ENCODE measurements at regions of chr3 and their contacts with region 1.

Region 1: DNA sequence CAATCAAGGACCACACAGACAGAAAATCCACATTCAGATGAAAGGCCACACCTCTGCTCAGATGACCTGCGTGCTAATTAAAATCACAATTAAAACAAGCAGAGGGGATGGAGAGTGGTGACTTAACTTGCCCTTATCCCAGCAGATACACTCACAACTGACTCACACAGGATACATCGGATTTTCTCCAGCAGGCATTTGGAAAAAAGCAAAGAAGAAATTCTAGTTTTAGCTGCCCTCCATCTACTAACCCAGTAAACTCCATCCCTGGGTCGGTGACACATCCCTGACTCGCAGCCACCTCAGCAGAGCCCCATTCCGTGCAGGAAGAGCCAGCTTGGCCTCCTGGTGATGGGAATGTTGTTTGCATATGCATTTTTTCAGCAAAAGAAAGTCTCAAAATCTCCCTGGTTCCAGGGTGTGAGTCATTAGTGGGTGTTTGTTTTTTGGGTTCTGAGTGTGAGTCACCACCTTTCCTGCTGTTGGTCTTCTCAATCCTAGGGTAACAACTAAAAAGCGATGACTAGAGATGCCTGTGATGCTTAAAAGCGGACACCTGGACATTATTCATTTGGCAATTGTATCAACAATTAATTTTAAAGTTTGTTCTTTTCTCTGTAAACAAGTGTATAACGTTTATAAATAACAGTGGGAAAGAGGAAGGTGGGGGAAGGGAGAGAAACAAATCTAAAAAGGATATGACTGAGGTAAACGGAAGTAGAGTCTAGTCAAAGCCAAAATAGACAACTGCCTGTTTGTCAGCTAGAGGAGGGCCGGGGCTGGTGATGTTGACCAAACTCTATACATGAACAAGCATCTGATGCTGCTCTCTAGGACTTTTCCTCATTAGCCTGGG is 49.8 kb upstream of the SLC4A7 start:
- DNase-seq: peak; percentile 70
- H3K4me3 Mint-ChIP-seq: peak overlapping the region; percentile 42
- H3K27ac Mint-ChIP-seq: peak overlapping the region; percentile 92
- H3K4me1 Mint-ChIP-seq: peaks cover 23% of the 10 kb centered on the region
- H3K27me3 Mint-ChIP-seq: no peaks in the 10 kb centered on the region

Region 2: GRCh38 chr3:27521179-27521871 is 12.6 kb before region 1 on chr3:
- CTCF ChIA-PET with region 1: interaction called, 3 read pairs
- POLR2A ChIA-PET with region 1: no interaction called
- intact Hi-C with region 1: loop called (anchors 1 kb)
- DNase-seq: peak; percentile 11
- H3K4me3 Mint-ChIP-seq: no peak overlapping the region
- H3K27ac Mint-ChIP-seq: no peak overlapping the region
- H3K4me1 Mint-ChIP-seq: peaks cover 8% of the 10 kb centered on the region
- H3K27me3 Mint-ChIP-seq: no peaks in the 10 kb centered on the region

Region 3: GRCh38 chr3:27544372-27544865 is 10.5 kb after region 1 on chr3:
- CTCF ChIA-PET with region 1: interaction called, 4 read pairs
- POLR2A ChIA-PET with region 1: no interaction called
- intact Hi-C with region 1: loop called (anchors 1 kb)
- DNase-seq: no peak
- H3K4me3 Mint-ChIP-seq: no peak overlapping the region
- H3K27ac Mint-ChIP-seq: peak overlapping the region; percentile 74
- H3K4me1 Mint-ChIP-seq: peaks cover 10% of the 10 kb centered on the region
- H3K27me3 Mint-ChIP-seq: peaks cover 2% of the 10 kb centered on the region

Region 4: GRCh38 chr3:27590437-27591298 is 56.7 kb after region 1 on chr3:
- CTCF ChIA-PET with region 1: no interaction called
- POLR2A ChIA-PET with region 1: no interaction called
- intact Hi-C with region 1: loop called (anchors 1 kb)
- DNase-seq: peak; percentile 13
- H3K4me3 Mint-ChIP-seq: no peak overlapping the region
- H3K27ac Mint-ChIP-seq: peak overlapping the region; percentile 62
- H3K4me1 Mint-ChIP-seq: peaks cover 25% of the 10 kb centered on the region
- H3K27me3 Mint-ChIP-seq: no peaks in the 10 kb centered on the region